Lower lobe of right lung (tissue), 2 donors: ENCODE measurements at regions of chr12 and their contacts with region 1.

Region 1: GRCh38 chr12:49707128-49707811 is at the start of gene FMNL3:
- DNase-seq: peak; percentile 99
- ATAC-seq: peak; percentile 99
- H3K4me3 ChIP-seq: peak within 1 kb of the TSS; percentile 78
- H3K27ac ChIP-seq: peak within 1 kb of the TSS; percentile 87
- H3K4me1 ChIP-seq: peaks cover 31% of the 10 kb centered on the region
- H3K27me3 ChIP-seq: no peaks in the 10 kb centered on the region
- CTCF ChIP-seq: peak; percentile 96
- total RNA-seq, gene FMNL3: 36.1 TPM

Region 2: DNA sequence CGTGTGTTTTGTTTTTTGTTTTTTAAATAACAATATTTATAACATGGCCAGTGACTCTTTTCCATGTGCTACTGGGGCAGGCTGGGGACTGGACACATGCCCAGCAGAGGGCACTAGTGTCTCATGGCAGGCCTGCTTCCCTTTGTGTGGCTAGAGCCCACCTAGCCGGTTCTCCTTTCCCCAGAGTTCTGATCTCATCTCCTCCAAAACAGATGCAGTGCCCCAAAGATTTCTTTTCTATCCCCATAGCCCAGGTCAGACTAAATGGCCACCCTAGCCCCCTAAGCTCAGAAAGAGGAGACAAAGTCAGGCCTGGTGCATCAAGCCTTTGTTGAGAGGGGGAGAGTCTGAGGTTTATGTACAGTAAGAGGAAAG is 62.7 kb before region 1 on chr12:
- intact Hi-C with region 1: loop called (anchors 5 kb)
- DNase-seq: peak; percentile 77
- ATAC-seq: peak; percentile 79 to 85
- H3K4me3 ChIP-seq: no peak overlapping the region
- H3K27ac ChIP-seq: peak overlapping the region; percentile 7
- H3K4me1 ChIP-seq: peaks cover 55% of the 10 kb centered on the region
- H3K27me3 ChIP-seq: no peaks in the 10 kb centered on the region
- CTCF ChIP-seq: peak; percentile 97